ENCODE measurements at regions of chr19 and their contacts with region 1.

Region 1: GRCh38 chr19:1103708-1104310 is at the start of gene GPX4:
- DNase-seq: peak; percentile 99
- H3K4me3 Mint-ChIP-seq: peak within 1 kb of the TSS; percentile 75
- H3K27ac Mint-ChIP-seq: peak within 1 kb of the TSS; percentile 89
- H3K4me1 Mint-ChIP-seq: peaks cover 50% of the 10 kb centered on the region
- H3K27me3 Mint-ChIP-seq: no peaks in the 10 kb centered on the region
- total RNA-seq, gene GPX4: 274 to 275 TPM

Region 2: GRCh38 chr19:925526-926322 is 178.1 kb before region 1 on chr19 and contains the start of gene ARID3A:
- CTCF ChIA-PET with region 1: no interaction called
- POLR2A ChIA-PET with region 1: no interaction called
- intact Hi-C with region 1: loop called (anchors 10 kb)
- DNase-seq: peak; percentile 80
- H3K4me3 Mint-ChIP-seq: peak within 1 kb of the TSS; percentile 75
- H3K27ac Mint-ChIP-seq: peak within 1 kb of the TSS; percentile 71
- H3K4me1 Mint-ChIP-seq: peaks cover 12% of the 10 kb centered on the region
- H3K27me3 Mint-ChIP-seq: no peaks in the 10 kb centered on the region
- total RNA-seq, gene ARID3A: 28.5 to 30.6 TPM

Region 3: GRCh38 chr19:1064661-1065605 is 38.9 kb before region 1 on chr19:
- CTCF ChIA-PET with region 1: interaction called, 5 read pairs
- POLR2A ChIA-PET with region 1: interaction called, 25 read pairs
- intact Hi-C with region 1: loop called (anchors 2 kb)
- DNase-seq: peak; percentile 80
- H3K4me3 Mint-ChIP-seq: peak overlapping the region; percentile 5
- H3K27ac Mint-ChIP-seq: no peak overlapping the region
- H3K4me1 Mint-ChIP-seq: peaks cover 24% of the 10 kb centered on the region
- H3K27me3 Mint-ChIP-seq: no peaks in the 10 kb centered on the region

Region 4: GRCh38 chr19:1087813-1088415 is 15.9 kb before region 1 on chr19:
- CTCF ChIA-PET with region 1: interaction called, 3 read pairs
- POLR2A ChIA-PET with region 1: interaction called, 11 read pairs
- intact Hi-C with region 1: no loop called
- DNase-seq: peak; percentile 51
- H3K4me3 Mint-ChIP-seq: peak overlapping the region; percentile 13
- H3K27ac Mint-ChIP-seq: peak overlapping the region; percentile 81
- H3K4me1 Mint-ChIP-seq: peaks cover 45% of the 10 kb centered on the region
- H3K27me3 Mint-ChIP-seq: no peaks in the 10 kb centered on the region

Region 5: DNA sequence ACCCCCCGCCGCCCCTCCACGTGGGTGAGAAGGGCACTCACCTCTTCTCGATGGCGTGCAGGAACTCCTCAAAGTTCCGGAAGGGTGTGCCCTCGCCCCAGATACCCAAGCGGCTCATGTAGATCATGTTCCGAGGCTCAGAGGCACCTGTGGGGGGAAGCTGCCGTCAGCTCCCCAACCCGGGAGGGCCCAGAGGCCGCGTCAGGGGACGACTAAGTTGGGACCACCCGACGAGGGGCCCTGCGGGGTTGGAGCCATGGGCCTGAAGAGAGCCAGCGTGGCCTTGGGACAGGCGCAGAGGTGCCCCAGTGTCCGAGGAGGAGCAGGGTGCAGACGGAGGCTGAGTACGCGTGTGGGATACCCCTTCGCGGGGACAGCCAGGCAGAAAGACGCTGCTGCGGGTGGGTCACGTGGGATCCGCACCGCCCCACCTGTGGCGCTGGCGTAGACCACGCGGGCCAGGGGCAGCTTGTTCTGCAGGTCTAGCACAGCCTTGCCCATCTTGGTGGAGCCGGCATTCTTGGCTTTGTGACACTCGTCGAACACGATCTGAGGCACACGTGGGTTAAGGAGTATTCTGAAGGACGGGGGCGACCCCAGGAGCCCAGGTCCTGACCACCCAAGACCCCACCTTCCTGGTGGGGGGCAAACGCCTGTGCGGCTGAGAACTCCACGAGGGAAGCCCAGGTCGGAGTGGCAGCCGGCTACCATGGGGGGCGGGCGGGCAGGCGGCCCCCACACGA is 15.8 kb after region 1 on chr19:
- CTCF ChIA-PET with region 1: no interaction called
- POLR2A ChIA-PET with region 1: no interaction called
- intact Hi-C with region 1: no loop called
- DNase-seq: no peak
- H3K4me3 Mint-ChIP-seq: no peak overlapping the region
- H3K27ac Mint-ChIP-seq: no peak overlapping the region
- H3K4me1 Mint-ChIP-seq: peaks cover 2% of the 10 kb centered on the region
- H3K27me3 Mint-ChIP-seq: no peaks in the 10 kb centered on the region

Region 6: GRCh38 chr19:1189419-1189818 is 85.6 kb after region 1 on chr19:
- CTCF ChIA-PET with region 1: interaction called, 3 read pairs
- POLR2A ChIA-PET with region 1: interaction called, 3 read pairs
- intact Hi-C with region 1: loop called (anchors 5 kb)
- DNase-seq: peak; percentile 86
- H3K4me3 Mint-ChIP-seq: peak overlapping the region; percentile 24
- H3K27ac Mint-ChIP-seq: peak overlapping the region; percentile 66
- H3K4me1 Mint-ChIP-seq: peaks cover 25% of the 10 kb centered on the region
- H3K27me3 Mint-ChIP-seq: no peaks in the 10 kb centered on the region

Region 7: DNA sequence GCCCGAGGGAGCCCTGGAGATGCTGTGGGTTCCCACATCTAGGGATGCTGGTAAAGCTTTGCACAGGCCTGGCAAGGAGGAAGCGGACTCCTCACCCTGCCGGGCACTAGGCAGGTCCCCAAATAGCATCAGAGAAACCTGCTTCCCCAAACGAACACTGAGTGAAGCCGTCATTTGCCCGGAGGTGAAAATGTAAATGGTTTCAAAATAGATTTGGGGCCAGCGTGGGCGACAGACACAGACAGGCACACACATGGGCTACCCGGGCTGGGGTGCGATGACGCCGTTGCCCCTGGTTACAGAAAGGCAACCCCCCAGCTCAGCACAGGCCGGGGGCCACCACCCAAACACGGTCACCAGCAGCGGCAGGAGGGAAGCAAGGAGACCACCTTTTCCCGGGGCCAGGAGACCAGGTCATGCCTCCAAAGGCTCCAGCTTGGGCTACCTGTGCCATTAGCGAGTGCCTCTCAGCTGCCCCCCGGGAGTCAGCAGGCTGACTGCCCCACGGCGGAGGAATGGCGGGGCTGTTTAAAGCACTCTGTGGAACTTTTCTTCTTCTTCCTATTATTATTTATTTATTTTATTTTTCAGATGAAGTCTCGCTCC is 232.4 kb after region 1 on chr19:
- CTCF ChIA-PET with region 1: no interaction called
- POLR2A ChIA-PET with region 1: no interaction called
- intact Hi-C with region 1: no loop called
- DNase-seq: no peak
- H3K4me3 Mint-ChIP-seq: no peak overlapping the region
- H3K27ac Mint-ChIP-seq: no peak overlapping the region
- H3K4me1 Mint-ChIP-seq: no peaks in the 10 kb centered on the region
- H3K27me3 Mint-ChIP-seq: peaks cover 2% of the 10 kb centered on the region